H1 (cell line): ENCODE measurements at regions of chr3 and their contacts with region 1.

Region 1: GRCh38 chr3:186783073-186783730 is at the start of gene EIF4A2:
- DNase-seq: peak; percentile 51 to 93
- H3K4me3 ChIP-seq: peak within 1 kb of the TSS; percentile 98 to 100 (median 99)
- H3K27ac ChIP-seq: peak within 1 kb of the TSS; percentile 98
- H3K4me1 ChIP-seq: peaks cover 0 to 3% (median 1%) of the 10 kb centered on the region in 4 experiments; a peak in 2 of 7 replicates
- H3K27me3 ChIP-seq: no peaks in the 10 kb centered on the region
- CTCF ChIP-seq: no peak
- EP300 ChIP-seq: peak; percentile 22 to 57; a peak in 2 of 3 replicates
- POLR2A ChIP-seq: peak; percentile 98 to 100
- RAD21 ChIP-seq: 0 out of 4 replicates have a peak, but pooled peaks of 1 of the 2 experiments have one; percentile 5
- total RNA-seq, gene EIF4A2: 596 and 604 TPM in 2 replicates

Region 2: GRCh38 chr3:186589121-186589520 is 194.1 kb before region 1 on chr3:
- CTCF ChIA-PET with region 1: interaction called, 13 read pairs
- POLR2A ChIA-PET with region 1: interaction called, 85 read pairs
- DNase-seq: no peak
- H3K4me3 ChIP-seq: no peak overlapping the region
- H3K27ac ChIP-seq: no peak overlapping the region
- H3K4me1 ChIP-seq: no peaks in the 10 kb centered on the region
- H3K27me3 ChIP-seq: no peaks in the 10 kb centered on the region
- CTCF ChIP-seq: peak in 2 of 3 experiments; percentile 45 to 54; a peak in 3 of 4 replicates
- EP300 ChIP-seq: no peak
- POLR2A ChIP-seq: no peak
- RAD21 ChIP-seq: peak; percentile 78 to 82

Region 3: DNA sequence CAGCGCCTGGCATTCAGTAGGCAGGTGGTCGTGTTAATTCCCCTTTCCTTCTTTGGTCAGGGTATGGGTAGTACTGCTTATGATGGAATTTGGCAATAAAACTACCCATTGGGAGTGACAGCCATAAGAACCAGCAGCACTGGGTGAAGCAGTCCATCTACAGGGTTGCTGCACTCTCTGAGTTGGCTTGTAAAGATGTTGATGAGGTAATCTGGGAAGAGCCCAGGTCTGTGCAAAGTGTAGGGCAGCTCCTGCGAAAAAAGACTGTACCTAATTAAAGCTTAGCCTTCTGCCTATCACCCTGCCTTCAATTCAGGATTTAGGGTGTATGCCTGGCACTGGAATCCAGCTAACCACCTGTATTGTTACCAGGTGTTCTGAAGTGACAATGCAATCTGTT is 147.7 kb before region 1 on chr3:
- CTCF ChIA-PET with region 1: no interaction called
- POLR2A ChIA-PET with region 1: interaction called, 11 read pairs
- DNase-seq: no peak
- H3K4me3 ChIP-seq: no peak overlapping the region
- H3K27ac ChIP-seq: no peak overlapping the region
- H3K4me1 ChIP-seq: peaks cover 0 to 3% (median 2%) of the 10 kb centered on the region in 4 experiments; a peak in 3 of 7 replicates
- H3K27me3 ChIP-seq: no peaks in the 10 kb centered on the region
- CTCF ChIP-seq: no peak
- EP300 ChIP-seq: no peak
- POLR2A ChIP-seq: no peak
- RAD21 ChIP-seq: no peak

Region 4: DNA sequence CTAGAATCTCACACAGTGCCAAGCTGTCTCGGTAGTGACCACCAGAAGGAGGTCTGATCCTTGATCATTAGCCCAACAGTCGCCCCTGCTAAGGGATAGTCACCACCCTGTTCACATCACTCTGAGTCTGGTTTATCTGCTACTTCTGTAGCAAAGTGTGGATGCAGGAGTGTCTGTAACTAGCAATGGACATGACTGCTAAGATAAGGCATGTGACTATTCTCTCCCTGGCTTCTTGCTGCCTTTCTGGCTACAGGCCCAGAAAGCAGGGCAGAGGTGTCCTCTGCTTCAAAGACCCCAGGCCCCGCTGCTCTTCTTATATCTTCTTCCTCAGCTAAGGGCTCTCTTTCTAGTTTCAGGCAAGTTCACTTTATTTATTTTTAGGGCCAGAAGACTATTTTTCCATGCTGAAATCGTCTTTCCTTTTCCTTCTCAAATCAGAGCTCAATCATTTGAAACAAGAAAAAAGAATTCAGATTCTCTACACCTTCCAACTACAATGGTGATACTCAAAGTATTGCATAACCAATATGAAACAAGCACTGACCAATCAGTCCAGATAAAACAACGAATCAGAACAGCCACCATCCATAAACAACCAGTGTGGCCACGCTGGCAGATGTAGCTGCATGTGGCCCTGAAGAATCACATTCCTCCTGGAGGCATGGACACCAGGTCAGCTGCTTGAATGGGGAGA is 74.1 kb before region 1 on chr3:
- CTCF ChIA-PET with region 1: no interaction called
- POLR2A ChIA-PET with region 1: interaction called, 14 read pairs
- DNase-seq: no peak
- H3K4me3 ChIP-seq: no peak overlapping the region
- H3K27ac ChIP-seq: no peak overlapping the region
- H3K4me1 ChIP-seq: peaks cover 0 to 7% (median 1%) of the 10 kb centered on the region in 4 experiments; a peak in 2 of 7 replicates
- H3K27me3 ChIP-seq: no peaks in the 10 kb centered on the region
- CTCF ChIP-seq: no peak
- EP300 ChIP-seq: no peak
- POLR2A ChIP-seq: no peak
- RAD21 ChIP-seq: no peak

Region 5: DNA sequence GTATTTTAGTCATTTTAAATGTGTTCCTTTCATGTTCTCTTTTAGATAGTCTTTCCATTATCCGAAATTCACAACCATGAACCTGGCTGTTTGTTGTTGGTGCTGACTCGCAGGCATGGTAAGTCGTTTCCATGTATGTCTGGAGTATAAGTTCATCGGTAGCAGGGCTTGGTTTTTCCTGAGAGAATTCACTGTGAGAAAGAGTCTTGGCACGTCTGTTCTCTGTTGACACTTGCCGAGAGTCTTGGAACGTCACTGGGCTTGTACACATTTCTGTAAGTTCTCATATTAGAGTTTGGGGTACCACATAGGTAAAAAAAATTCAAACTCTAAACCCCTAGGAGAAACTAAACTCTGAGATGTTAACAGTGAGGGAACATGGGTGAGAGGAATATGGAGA is 29.2 kb before region 1 on chr3:
- CTCF ChIA-PET with region 1: interaction called, 3 read pairs
- POLR2A ChIA-PET with region 1: interaction called, 38 read pairs
- DNase-seq: no peak
- H3K4me3 ChIP-seq: no peak overlapping the region
- H3K27ac ChIP-seq: no peak overlapping the region
- H3K4me1 ChIP-seq: peaks cover 0 to 2% (median 0%) of the 10 kb centered on the region in 4 experiments; a peak in 3 of 7 replicates
- H3K27me3 ChIP-seq: no peaks in the 10 kb centered on the region
- CTCF ChIP-seq: no peak
- EP300 ChIP-seq: no peak
- POLR2A ChIP-seq: no peak
- RAD21 ChIP-seq: no peak

Region 6: GRCh38 chr3:186806089-186807055 is 23.2 kb after region 1 on chr3 and contains the start of gene RFC4:
- CTCF ChIA-PET with region 1: no interaction called
- POLR2A ChIA-PET with region 1: interaction called, 166 read pairs
- DNase-seq: peak in 1 of 2 experiments; percentile 89
- H3K4me3 ChIP-seq: peak within 1 kb of the TSS; percentile 72 to 97 (median 82)
- H3K27ac ChIP-seq: peak within 1 kb of the TSS; percentile 97
- H3K4me1 ChIP-seq: peaks cover 0 to 9% (median 3%) of the 10 kb centered on the region in 4 experiments; a peak in 3 of 7 replicates
- H3K27me3 ChIP-seq: no peaks in the 10 kb centered on the region
- CTCF ChIP-seq: no peak
- EP300 ChIP-seq: no peak; a peak in 1 of 3 replicates
- POLR2A ChIP-seq: peak; percentile 67 to 96
- RAD21 ChIP-seq: peak; percentile 0 to 1; a peak in 1 of 4 replicates
- total RNA-seq, gene RFC4: 86.9 and 100 TPM in 2 replicates

Region 7: DNA sequence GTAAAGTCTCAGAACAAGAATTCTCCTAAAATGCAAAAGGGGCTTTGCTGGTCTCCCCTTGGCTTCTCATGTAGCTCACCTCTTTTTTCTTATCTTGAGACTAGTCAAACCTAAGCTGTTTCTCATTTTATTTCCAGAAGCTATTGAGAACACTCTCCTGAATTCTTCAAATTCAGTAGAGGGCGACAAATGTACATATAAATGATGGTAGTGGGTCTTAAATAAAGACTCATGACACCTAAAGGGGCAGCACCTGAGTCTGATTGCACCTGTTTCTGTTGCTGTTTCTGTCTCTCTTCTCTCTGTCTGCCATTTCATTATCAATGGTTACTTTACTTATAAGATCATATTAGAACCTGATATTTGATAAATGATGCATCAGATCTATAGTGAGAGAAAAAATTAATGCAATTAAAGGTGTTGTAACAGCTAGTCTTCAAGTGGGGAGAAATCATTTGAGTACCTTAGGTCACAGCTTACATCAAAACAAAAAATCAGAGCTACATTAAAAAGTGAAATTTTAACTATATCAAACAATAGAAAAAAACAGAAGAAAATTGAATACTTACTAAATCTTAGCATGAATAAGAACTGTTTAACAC is 66.3 kb after region 1 on chr3:
- CTCF ChIA-PET with region 1: no interaction called
- POLR2A ChIA-PET with region 1: no interaction called
- DNase-seq: no peak
- H3K4me3 ChIP-seq: no peak overlapping the region
- H3K27ac ChIP-seq: no peak overlapping the region
- H3K4me1 ChIP-seq: no peaks in the 10 kb centered on the region
- H3K27me3 ChIP-seq: no peaks in the 10 kb centered on the region
- CTCF ChIP-seq: peak in 2 of 3 experiments; percentile 49 to 71; a peak in 3 of 4 replicates
- EP300 ChIP-seq: no peak
- POLR2A ChIP-seq: no peak
- RAD21 ChIP-seq: peak; percentile 84